Activated T-helper 1 cell treated with anti-CD3 and anti-CD28 coated beads, Interleukin-12 subunit alpha, Interleukin-12 subunit beta, Interleukin-2, Interleukin-4 antibody, amounts not matched to agents 30 ng/mL and 10 ng/mL and 1 ng/mL, durations not matched to agents 14 hours and 24 hours and 36 hours (primary cell): ENCODE measurements at regions of chr3 and their contacts with region 1.

Region 1: GRCh38 chr3:9932843-9933560 is 632 bp upstream of the CRELD1 start:
- DNase-seq: peak; percentile 78
- H3K4me3 Mint-ChIP-seq: peak overlapping the region; percentile 96
- H3K27ac Mint-ChIP-seq: peak overlapping the region; percentile 95
- H3K4me1 Mint-ChIP-seq: peaks cover 34% of the 10 kb centered on the region
- H3K27me3 Mint-ChIP-seq: no peaks in the 10 kb centered on the region

Region 2: DNA sequence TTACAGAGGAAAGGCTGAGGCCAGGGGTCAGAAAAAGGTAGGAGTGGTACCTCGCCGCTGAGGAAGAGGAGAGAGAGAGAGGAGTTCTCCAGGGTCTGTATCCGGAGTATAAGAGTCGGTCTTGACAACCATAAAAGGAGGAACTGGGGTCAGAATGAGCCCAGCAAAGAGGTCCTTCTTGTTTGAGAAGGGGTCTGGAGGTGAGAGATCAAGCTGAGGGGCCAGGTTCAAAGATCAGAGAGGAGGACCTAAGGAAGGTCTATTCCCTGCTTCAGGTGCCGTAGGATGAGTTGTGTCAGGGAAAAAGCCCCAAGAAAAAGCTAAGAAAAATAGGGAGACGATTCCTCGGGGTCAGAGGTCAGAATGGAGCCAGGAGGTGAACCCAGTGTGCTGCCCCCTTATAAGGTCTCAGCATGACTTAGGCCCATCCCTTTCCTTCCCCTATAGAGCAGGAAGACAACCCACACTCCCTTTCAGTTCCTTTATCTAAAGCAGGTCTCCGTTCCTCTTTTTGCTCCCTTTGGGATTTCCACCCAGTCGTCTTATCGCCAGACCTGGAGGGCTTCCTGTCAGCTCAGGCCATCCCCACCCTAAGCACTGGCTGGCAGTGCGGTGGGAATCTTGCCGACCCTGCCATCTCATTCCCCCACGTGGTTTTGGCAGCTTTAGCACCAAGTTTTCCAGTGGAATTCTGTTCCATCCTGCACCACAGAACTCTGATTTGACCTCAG is 283.0 kb before region 1 on chr3:
- intact Hi-C with region 1: loop called (anchors 1 kb)
- DNase-seq: no peak
- H3K4me3 Mint-ChIP-seq: peak overlapping the region; percentile 93
- H3K27ac Mint-ChIP-seq: peak overlapping the region; percentile 82
- H3K4me1 Mint-ChIP-seq: peaks cover 13% of the 10 kb centered on the region
- H3K27me3 Mint-ChIP-seq: no peaks in the 10 kb centered on the region

Region 3: GRCh38 chr3:9704347-9705322 is 228.4 kb before region 1 on chr3:
- intact Hi-C with region 1: no loop called
- DNase-seq: no peak
- H3K4me3 Mint-ChIP-seq: no peak overlapping the region
- H3K27ac Mint-ChIP-seq: no peak overlapping the region
- H3K4me1 Mint-ChIP-seq: no peaks in the 10 kb centered on the region
- H3K27me3 Mint-ChIP-seq: peaks cover 23% of the 10 kb centered on the region

Region 4: DNA sequence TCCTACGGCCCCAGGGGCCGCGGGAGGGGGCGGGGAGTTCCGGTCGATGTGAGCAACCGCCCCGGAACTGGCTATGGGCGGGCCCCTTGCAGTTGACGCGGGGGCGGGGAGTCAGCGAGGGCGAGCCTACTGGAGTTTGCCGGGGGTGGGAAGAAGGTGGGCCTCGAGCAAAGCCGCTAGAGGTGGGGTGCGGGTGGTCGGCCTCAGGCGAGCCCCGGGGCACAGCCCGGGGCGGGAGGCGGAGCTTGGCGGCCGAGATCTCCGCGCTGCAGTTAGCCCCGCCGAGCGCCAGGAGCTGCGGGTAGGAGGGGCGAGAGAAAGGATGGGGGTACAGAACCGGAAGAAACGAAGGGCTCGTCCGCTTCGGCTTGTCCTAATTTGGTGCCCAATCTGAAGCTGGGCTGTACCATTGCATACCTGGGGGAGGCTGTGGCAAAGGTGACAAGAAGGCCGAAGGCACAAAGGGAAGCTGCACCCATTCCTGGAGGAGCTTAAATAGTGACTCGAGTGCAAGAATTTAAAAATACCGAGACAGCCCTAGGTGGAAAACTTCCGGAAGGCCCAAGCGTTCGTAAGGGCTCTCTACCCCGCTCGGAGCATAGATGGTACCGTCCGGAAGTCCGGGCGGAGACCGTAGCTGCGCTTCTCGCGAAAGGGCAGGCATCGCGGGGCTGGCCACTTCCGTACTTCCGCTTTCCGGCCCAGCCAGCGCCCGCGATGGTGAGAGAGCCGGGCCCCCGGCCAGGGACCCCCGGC is 140.4 kb before region 1 on chr3 and contains the starts of genes ARPC4 and TADA3:
- intact Hi-C with region 1: loop called (anchors 2 kb)
- DNase-seq: peak; percentile 89
- H3K4me3 Mint-ChIP-seq: peak within 1 kb of the TSS; percentile 99
- H3K27ac Mint-ChIP-seq: peak within 1 kb of the TSS; percentile 100
- H3K4me1 Mint-ChIP-seq: peaks cover 57% of the 10 kb centered on the region
- H3K27me3 Mint-ChIP-seq: no peaks in the 10 kb centered on the region
- total RNA-seq, gene ARPC4: 268 and 273 TPM in 2 replicates
- total RNA-seq, gene TADA3: 63.4 and 63.6 TPM in 2 replicates

Region 5: GRCh38 chr3:9897408-9898372 is 35.3 kb before region 1 on chr3:
- intact Hi-C with region 1: no loop called
- DNase-seq: no peak
- H3K4me3 Mint-ChIP-seq: no peak overlapping the region
- H3K27ac Mint-ChIP-seq: no peak overlapping the region
- H3K4me1 Mint-ChIP-seq: peaks cover 53% of the 10 kb centered on the region
- H3K27me3 Mint-ChIP-seq: no peaks in the 10 kb centered on the region

Region 6: GRCh38 chr3:9915254-9916141 is 17.5 kb before region 1 on chr3:
- intact Hi-C with region 1: loop called (anchors 1 kb)
- DNase-seq: no peak
- H3K4me3 Mint-ChIP-seq: peak overlapping the region; percentile 68
- H3K27ac Mint-ChIP-seq: no peak overlapping the region
- H3K4me1 Mint-ChIP-seq: peaks cover 16% of the 10 kb centered on the region
- H3K27me3 Mint-ChIP-seq: peaks cover 7% of the 10 kb centered on the region

Region 7: GRCh38 chr3:9986237-9986725 is 53.3 kb after region 1 on chr3:
- intact Hi-C with region 1: loop called (anchors 1 kb)
- DNase-seq: no peak
- H3K4me3 Mint-ChIP-seq: peak overlapping the region; percentile 97
- H3K27ac Mint-ChIP-seq: peak overlapping the region; percentile 98
- H3K4me1 Mint-ChIP-seq: peaks cover 27% of the 10 kb centered on the region
- H3K27me3 Mint-ChIP-seq: no peaks in the 10 kb centered on the region

Region 8: DNA sequence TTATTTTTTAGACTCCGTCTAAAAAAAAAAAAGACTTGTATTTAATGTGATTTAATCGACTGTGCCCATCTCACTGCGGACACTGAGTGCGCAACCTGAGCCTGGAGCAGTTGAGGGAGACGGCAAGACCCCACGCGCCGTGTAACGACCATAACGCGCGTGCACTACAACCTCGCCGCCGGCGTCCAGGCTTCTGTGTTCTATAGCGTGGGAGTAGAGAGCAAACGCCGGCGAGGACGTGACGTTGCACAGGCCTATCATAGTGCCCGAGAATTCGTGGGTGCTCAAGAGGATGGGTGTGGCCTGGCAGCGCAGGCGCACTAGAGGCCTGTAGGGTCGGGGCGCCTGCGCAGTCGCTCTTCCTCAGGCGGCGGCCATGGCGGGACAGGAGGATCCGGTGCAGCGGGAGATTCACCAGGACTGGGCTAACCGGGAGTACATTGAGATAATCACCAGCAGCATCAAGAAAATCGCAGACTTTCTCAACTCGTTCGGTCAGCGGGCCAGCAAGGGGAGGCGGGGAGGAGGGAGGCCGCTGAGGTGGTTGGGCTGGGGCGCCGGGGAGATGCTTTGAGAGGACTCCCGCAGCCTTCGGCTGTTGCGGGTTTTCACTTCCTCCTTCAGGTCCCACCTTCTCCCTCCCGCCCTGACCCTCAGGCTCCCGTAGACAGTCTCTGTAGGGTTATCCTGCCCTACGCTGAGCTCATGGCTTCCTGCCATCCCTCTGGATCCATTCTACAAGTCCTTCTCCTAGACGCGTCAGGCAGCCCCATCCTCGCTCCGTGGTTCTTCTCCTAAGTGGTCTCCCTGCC is 182.5 kb after region 1 on chr3 and contains the start of gene BRK1:
- intact Hi-C with region 1: loop called (anchors 1 kb)
- DNase-seq: peak; percentile 90
- H3K4me3 Mint-ChIP-seq: peak within 1 kb of the TSS; percentile 99
- H3K27ac Mint-ChIP-seq: peak within 1 kb of the TSS; percentile 96
- H3K4me1 Mint-ChIP-seq: peaks cover 31% of the 10 kb centered on the region
- H3K27me3 Mint-ChIP-seq: peaks cover 2% of the 10 kb centered on the region
- total RNA-seq, gene BRK1: 97.2 and 105 TPM in 2 replicates

Region 9: DNA sequence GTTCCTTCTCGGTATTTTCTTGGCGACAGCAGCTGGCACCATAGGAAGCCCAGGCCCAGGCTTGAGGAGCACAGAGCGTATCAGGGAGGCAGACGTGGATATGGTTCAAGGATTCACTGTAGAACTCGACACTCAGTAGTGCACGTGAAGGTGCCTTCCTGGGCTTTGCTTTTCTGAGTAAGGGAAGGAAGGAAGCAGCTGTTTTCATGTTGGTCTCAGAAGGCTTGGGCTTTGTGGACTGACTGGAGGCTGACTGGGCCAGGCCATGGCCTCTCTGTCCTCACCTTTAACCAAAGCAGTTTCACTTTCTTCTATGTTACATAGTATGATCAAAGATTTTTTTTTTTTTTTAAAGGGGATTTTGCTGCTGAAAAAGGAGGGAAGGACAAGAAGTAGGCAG is 366.7 kb after region 1 on chr3:
- intact Hi-C with region 1: no loop called
- DNase-seq: no peak
- H3K4me3 Mint-ChIP-seq: no peak overlapping the region
- H3K27ac Mint-ChIP-seq: peak overlapping the region; percentile 16
- H3K4me1 Mint-ChIP-seq: peaks cover 12% of the 10 kb centered on the region
- H3K27me3 Mint-ChIP-seq: no peaks in the 10 kb centered on the region

Region 10: DNA sequence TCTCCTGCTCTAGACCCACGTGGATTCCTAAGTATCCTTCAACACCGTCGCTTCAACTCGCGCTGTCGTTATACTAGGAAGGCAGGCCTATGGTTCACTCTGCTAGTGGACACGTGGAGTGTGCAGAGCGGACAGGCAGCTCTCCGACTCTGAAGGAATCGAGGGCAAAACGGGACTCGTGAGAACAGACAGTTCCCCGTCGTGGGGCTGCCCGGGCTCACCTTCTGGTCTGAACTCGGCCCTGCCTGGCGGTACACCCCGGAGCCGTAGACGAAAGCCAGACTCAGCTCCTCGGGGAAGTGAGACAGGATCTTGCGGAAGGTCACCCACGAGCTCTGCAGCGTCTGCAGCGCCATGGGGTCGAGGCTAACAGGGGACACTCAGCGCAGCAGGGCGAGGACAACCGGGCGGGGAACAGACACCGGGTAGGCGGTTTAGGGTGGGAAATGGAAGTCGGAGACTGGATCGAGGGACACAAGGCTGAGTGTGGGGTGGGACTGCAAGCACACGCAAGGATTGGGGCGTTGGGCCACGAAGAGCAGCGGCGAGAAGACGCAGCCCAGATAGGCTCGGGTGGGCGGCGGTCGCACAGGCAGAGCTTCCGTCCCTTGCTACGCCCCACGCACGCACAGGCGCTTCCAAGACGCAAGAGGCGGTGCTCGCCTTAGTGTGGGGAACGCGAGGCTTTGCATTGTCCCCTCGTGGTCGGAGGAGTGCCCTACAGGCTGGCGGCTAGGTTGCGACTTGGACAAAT is 1913.5 kb after region 1 on chr3 and contains the start of gene TAMM41:
- intact Hi-C with region 1: loop called (anchors 5 kb)
- DNase-seq: peak; percentile 86
- H3K4me3 Mint-ChIP-seq: peak within 1 kb of the TSS; percentile 96
- H3K27ac Mint-ChIP-seq: peak within 1 kb of the TSS; percentile 93
- H3K4me1 Mint-ChIP-seq: peaks cover 26% of the 10 kb centered on the region
- H3K27me3 Mint-ChIP-seq: no peaks in the 10 kb centered on the region
- total RNA-seq, gene TAMM41: 35.2 and 38.0 TPM in 2 replicates